ENCODE measurements at regions of chr3 and their contacts with region 1.

Region 1: GRCh38 chr3:25856902-25857518 is 67.1 kb downstream of the OXSM start:
- DNase-seq: no peak
- H3K4me3 ChIP-seq: no peak overlapping the region
- H3K27ac ChIP-seq: no peak overlapping the region
- H3K4me1 ChIP-seq: peaks cover 3 to 13% of the 10 kb centered on the region in 2 donors
- H3K27me3 ChIP-seq: no peaks in the 10 kb centered on the region
- CTCF ChIP-seq: peak in 5 of 6 experiments; percentile 40 to 77 (median 66)
- POLR2A ChIP-seq: no peak

Region 2: GRCh38 chr3:25648107-25648535 is 208.9 kb before region 1 on chr3:
- intact Hi-C with region 1: loop called (anchors 5 kb)
- DNase-seq: peak; percentile 84 to 86
- H3K4me3 ChIP-seq: no peak overlapping the region
- H3K27ac ChIP-seq: no peak overlapping the region
- H3K4me1 ChIP-seq: peaks cover 4 to 5% of the 10 kb centered on the region in 2 donors
- H3K27me3 ChIP-seq: no peaks in the 10 kb centered on the region
- CTCF ChIP-seq: peak; percentile 74 to 99 (median 93)
- POLR2A ChIP-seq: no peak

Measured in thyroid gland (tissue), 4 donors.